Prostate gland (tissue), 2 donors: ENCODE measurements at regions of chr7 and their contacts with region 1.

Region 1: DNA sequence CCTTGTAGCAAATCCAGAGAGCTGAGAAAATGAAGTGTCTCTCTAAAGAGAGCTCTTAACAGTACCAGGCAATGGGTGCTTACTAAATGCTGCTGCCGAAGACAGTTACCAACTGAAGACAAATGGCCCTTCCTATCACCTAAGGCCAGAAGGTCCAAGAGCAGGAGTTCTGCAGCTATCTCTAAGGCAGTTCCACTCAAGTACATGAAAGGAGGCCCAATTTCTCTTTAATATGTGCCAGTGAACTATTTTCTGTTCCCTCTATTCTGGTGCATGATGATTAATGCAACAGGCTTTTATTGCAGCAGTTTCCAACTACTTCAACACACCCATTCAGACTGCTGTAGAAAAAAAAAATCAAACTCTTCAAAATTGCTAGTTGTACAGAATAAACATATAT is 122.5 kb downstream of the SLC25A13 start:
- DNase-seq: no peak
- H3K4me3 ChIP-seq: no peak overlapping the region
- H3K27ac ChIP-seq: no peak overlapping the region
- H3K4me1 ChIP-seq: no peaks in the 10 kb centered on the region
- H3K27me3 ChIP-seq: no peaks in the 10 kb centered on the region
- CTCF ChIP-seq: no peak
- POLR2A ChIP-seq: no peak

Region 2: GRCh38 chr7:96097835-96098234 is 101.6 kb before region 1 on chr7:
- intact Hi-C with region 1: no loop called
- DNase-seq: no peak
- H3K4me3 ChIP-seq: no peak overlapping the region
- H3K27ac ChIP-seq: no peak overlapping the region
- H3K4me1 ChIP-seq: no peaks in the 10 kb centered on the region
- H3K27me3 ChIP-seq: no peaks in the 10 kb centered on the region
- CTCF ChIP-seq: no peak
- POLR2A ChIP-seq: no peak

Region 3: GRCh38 chr7:96311967-96312366 is 112.5 kb after region 1 on chr7:
- intact Hi-C with region 1: loop called (anchors 10 kb)
- DNase-seq: peak; percentile 26
- H3K4me3 ChIP-seq: no peak overlapping the region
- H3K27ac ChIP-seq: no peak overlapping the region
- H3K4me1 ChIP-seq: peaks cover 3% of the 10 kb centered on the region
- H3K27me3 ChIP-seq: no peaks in the 10 kb centered on the region
- CTCF ChIP-seq: no peak
- POLR2A ChIP-seq: no peak

Region 4: DNA sequence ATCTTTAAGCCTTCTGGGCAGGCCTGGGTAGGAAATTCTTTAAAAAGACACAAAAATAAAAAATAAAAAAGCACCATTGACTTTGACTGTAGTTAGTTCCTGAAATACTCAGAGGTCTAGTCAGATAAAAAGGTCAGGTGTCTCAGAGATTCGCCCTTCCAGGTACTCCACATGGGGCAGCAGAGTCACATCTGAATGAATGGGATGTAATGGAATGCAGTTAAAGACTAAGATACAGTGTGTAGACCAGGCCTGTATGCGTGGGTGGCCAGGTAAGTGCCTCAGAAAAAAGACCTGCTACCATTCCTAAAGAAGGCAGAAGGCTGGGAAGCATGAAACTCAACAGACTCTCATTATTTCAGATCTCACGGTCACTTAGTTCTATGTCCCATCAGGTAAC is 578.8 kb after region 1 on chr7:
- intact Hi-C with region 1: no loop called
- DNase-seq: no peak
- H3K4me3 ChIP-seq: no peak overlapping the region
- H3K27ac ChIP-seq: no peak overlapping the region
- H3K4me1 ChIP-seq: no peaks in the 10 kb centered on the region
- H3K27me3 ChIP-seq: no peaks in the 10 kb centered on the region
- CTCF ChIP-seq: no peak
- POLR2A ChIP-seq: no peak